Activated CD8-positive, alpha-beta memory T cell treated with anti-CD3 and anti-CD28 coated beads, Interleukin-2, amount 10 ng/mL, durations not matched to agents 7 days and 5 days (primary cell): ENCODE measurements at regions of chr12 and their contacts with region 1.

Region 1: DNA sequence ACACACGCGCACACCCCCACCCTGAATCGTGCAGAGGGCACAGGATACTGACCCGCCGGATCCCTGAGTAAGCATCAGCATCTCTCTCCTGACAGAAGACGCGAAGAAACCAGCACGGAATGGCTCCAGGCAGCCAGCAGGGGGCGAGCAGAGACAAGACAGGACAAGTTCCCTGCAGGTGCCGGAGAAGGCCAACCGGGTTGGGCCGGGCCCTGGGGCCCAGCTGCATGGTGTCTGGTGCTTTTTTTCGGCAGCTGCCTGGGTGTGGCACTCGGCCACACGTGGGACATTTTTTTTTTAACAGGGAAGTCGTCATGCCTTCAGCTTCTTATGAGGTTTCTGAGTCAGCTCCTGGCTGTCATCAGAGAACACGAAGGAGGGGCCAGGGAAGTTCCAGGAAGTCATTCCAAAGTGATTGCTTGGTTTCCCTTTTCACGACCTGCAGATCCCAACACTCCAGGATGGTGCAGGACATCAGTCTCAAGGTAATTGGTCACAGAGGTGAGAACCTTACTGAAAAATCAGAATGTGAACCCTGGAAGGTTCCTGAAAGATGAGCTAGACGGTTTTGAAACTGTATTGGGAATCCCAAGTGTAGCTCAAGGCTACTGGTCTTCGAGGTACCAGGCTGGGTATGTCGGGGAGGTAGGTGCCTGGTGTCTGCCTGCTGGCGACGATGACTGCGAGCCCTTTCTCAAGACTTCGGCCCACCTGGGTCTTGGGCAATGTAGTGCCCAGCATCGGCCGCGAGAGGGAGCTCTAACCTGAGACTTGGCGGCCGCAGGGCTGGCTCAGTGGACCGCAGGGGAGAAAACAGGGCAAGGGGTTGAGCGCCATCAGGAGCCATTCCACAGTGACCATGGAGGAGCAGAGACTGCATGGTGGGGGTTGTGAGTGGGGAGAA is 190.8 kb upstream of the PRMT8 start:
- DNase-seq: peak; percentile 88
- ATAC-seq: peak; percentile 84
- H3K4me3 Mint-ChIP-seq: no peak overlapping the region
- H3K27ac Mint-ChIP-seq: peak overlapping the region; percentile 81
- H3K4me1 Mint-ChIP-seq: peaks cover 14% of the 10 kb centered on the region
- H3K27me3 Mint-ChIP-seq: peaks cover 10% of the 10 kb centered on the region

Region 2: DNA sequence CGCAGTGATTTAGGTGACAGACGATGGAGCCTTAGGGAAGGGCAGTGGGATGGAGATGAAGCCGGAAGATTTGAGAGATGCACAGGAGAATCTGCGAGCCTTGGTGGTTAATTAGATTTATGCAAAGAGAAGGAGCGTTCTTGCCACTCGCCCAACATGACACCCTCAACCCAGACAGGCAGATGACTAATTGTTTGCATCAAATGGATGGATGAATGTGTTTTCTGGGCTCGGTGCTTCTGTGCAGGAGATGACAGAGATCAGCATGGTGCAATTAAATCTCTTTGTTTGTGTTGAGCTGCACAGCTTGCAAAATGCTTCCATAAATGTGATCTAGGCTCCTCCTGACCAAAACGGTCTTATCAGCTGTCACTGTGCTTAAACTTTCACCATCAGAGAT is 11.5 kb before region 1 on chr12:
- CTCF ChIA-PET with region 1: interaction called, 24 read pairs
- DNase-seq: no peak
- ATAC-seq: no peak
- H3K4me3 Mint-ChIP-seq: no peak overlapping the region
- H3K27ac Mint-ChIP-seq: no peak overlapping the region
- H3K4me1 Mint-ChIP-seq: no peaks in the 10 kb centered on the region
- H3K27me3 Mint-ChIP-seq: no peaks in the 10 kb centered on the region

Region 3: DNA sequence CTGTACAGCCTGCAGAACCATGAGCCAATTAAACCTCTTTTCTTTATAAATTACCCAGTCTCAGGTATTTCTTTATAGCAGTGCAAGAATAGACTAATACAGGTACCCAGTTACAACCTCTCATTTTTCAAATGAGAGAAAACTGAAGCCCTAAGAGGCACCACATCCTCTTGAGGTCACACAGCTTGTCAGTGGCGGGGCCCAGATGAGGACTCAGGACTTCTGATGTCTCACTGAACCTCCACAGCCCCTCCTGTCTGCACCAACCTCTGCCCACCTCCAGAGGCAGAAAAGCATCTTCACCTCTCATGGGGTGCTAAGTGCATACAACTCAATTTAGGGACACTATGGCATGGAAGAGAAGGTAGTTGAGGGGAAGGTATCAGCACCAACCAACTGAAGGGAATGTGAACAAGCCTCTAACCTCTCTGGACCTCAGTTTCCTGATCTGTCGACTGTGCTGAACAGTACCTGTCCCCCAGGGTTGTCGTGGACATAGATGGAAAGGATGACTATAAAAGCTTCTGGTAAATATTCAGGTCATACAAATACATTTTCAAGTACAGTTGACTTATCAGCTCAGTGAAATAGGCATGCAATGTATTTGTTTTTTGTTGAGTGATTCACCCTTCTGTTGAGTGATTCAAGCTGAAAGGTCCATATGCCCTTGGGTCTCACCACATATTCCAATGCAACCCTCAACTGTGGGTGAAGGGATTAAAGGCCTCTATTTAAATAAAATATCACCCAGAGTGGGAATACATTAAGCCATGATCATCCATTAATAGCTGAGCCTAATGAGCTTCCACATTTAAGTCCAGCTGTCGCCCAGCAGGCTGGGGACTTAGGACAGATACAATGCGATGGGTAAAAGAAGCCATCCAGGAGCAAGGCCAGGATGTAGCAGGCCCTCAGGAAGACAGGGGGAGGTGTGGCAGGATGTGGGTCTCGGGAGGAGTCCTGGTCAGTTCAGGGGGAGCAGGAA is 332.4 kb after region 1 on chr12:
- CTCF ChIA-PET with region 1: interaction called, 11 read pairs
- DNase-seq: peak; percentile 86
- ATAC-seq: peak; percentile 96
- H3K4me3 Mint-ChIP-seq: no peak overlapping the region
- H3K27ac Mint-ChIP-seq: peak overlapping the region; percentile 84
- H3K4me1 Mint-ChIP-seq: peaks cover 26% of the 10 kb centered on the region
- H3K27me3 Mint-ChIP-seq: no peaks in the 10 kb centered on the region

Region 4: DNA sequence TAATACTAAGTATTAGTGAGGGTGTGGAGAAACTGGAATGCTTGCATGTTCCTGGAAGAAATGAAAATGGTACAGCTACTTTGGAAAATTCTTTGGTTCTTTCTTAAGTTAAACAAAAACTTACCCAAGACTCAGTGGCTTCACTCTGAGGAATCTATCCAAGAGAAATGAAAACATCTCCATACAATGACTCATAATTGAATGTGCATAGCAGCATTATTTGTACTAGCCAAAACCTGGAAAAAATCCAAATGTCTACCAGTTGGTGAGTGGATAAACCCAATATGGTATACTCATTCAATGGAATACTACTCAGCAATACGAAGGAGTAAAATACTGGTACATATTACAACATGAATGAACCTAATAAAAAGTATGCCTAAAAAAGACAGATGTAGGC is 470.7 kb after region 1 on chr12:
- CTCF ChIA-PET with region 1: interaction called, 32 read pairs
- DNase-seq: no peak
- ATAC-seq: no peak
- H3K4me3 Mint-ChIP-seq: no peak overlapping the region
- H3K27ac Mint-ChIP-seq: no peak overlapping the region
- H3K4me1 Mint-ChIP-seq: peaks cover 10% of the 10 kb centered on the region
- H3K27me3 Mint-ChIP-seq: no peaks in the 10 kb centered on the region

Region 5: DNA sequence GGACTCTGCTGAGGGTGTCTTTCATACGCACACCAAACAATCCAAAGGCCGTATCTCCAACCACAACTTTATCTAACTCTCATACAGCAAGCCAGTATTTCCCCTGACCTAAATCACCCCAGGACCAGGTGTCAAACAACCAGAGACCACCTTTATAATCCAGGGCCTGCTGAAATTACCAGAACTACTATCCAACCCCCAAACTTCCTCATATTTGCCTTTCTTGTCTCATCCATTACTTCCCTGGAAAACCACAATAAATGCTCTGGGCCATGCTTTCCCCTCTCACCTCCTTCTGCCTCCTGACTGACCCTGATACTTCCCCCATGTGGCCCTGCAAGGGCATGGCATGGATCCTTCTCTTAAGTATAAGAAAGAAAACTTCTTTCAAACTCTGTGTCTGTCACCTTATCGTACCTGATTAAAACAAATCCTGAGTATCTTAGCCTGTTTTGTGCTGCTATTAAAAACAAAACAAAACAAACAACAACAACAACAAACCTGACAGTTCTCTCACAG is 497.4 kb after region 1 on chr12:
- CTCF ChIA-PET with region 1: interaction called, 38 read pairs
- DNase-seq: no peak
- ATAC-seq: no peak
- H3K4me3 Mint-ChIP-seq: no peak overlapping the region
- H3K27ac Mint-ChIP-seq: no peak overlapping the region
- H3K4me1 Mint-ChIP-seq: peaks cover 9% of the 10 kb centered on the region
- H3K27me3 Mint-ChIP-seq: no peaks in the 10 kb centered on the region

Region 6: DNA sequence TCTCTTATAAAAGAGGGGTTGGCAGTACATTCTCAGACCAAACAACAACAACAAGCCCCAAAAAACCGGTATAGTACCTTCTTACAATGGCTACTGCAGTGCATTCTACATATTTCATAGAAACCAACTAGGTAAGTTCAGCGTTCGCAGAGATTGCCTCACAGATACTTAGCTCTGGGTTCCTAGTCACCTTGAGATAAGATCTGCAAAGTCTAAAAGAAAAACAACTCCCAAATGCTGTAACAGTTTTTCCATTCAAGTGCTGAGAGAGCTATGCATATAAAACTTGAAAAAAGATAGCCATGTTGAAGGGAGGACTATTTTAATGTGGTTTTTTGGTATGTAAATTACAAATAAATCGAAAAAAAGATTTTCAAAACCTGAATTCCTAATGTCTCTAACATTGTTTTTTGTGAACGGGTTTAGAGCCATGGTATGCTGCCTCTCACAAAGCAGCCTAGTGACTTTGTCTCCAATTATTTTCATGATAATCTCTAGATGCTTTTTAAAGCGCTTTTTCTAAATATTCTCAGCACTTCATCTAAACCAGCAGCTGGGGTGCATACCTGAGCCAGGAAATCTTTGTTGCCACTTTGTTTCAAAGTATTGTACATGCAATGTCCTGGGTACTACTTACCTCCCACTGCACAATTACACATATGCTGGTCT is 509.3 kb after region 1 on chr12:
- CTCF ChIA-PET with region 1: interaction called, 114 read pairs
- DNase-seq: no peak
- ATAC-seq: no peak
- H3K4me3 Mint-ChIP-seq: no peak overlapping the region
- H3K27ac Mint-ChIP-seq: no peak overlapping the region
- H3K4me1 Mint-ChIP-seq: peaks cover 3% of the 10 kb centered on the region
- H3K27me3 Mint-ChIP-seq: no peaks in the 10 kb centered on the region